Activated CD4-positive, alpha-beta T cell treated with anti-CD3 and anti-CD28 coated beads for 36 hours (primary cell): ENCODE measurements at regions of chr1 and their contacts with region 1.

Region 1: GRCh38 chr1:205750138-205751035 is at the start of gene NUCKS1:
- DNase-seq: peak; percentile 98
- ATAC-seq: peak; percentile 81
- H3K4me3 Mint-ChIP-seq: peak within 1 kb of the TSS; percentile 87
- H3K27ac Mint-ChIP-seq: peak within 1 kb of the TSS; percentile 96
- H3K4me1 Mint-ChIP-seq: peaks cover 32% of the 10 kb centered on the region
- H3K27me3 Mint-ChIP-seq: no peaks in the 10 kb centered on the region
- total RNA-seq, gene NUCKS1: 189 to 260 TPM

Region 2: GRCh38 chr1:205211169-205211838 is 539.1 kb before region 1 on chr1 and contains the start of gene DSTYK:
- CTCF ChIA-PET with region 1: no interaction called
- POLR2A ChIA-PET with region 1: no interaction called
- intact Hi-C with region 1: loop called in 1 of 2 experiments (anchors 5 kb)
- DNase-seq: peak; percentile 97
- ATAC-seq: peak; percentile 90
- H3K4me3 Mint-ChIP-seq: peak within 1 kb of the TSS; percentile 97
- H3K27ac Mint-ChIP-seq: peak within 1 kb of the TSS; percentile 95
- H3K4me1 Mint-ChIP-seq: peaks cover 54% of the 10 kb centered on the region
- H3K27me3 Mint-ChIP-seq: no peaks in the 10 kb centered on the region
- total RNA-seq, gene DSTYK: 9.4 to 12.3 TPM

Region 3: DNA sequence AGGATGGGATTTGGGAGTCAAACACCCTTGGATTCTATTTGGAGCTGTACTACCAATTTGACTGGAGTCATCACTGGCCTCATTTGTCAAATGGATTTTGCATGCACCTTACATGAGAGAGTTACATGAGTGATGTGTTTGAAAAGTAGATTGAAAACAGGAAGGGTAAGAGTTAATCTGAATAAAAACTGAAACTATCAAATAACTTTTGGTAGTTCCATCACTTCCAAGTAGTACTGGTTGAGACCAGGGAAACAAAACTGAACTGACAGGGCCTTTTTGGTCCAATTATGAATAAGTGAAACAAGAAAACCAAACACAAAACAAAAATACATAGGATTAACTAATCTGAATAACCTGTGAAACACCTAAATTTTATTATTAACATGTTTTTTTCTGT is 30.6 kb before region 1 on chr1:
- CTCF ChIA-PET with region 1: no interaction called
- POLR2A ChIA-PET with region 1: no interaction called
- intact Hi-C with region 1: loop called in 1 of 2 experiments (anchors 2 kb)
- DNase-seq: no peak
- ATAC-seq: peak; percentile 83
- H3K4me3 Mint-ChIP-seq: no peak overlapping the region
- H3K27ac Mint-ChIP-seq: peak overlapping the region; percentile 83
- H3K4me1 Mint-ChIP-seq: peaks cover 32% of the 10 kb centered on the region
- H3K27me3 Mint-ChIP-seq: no peaks in the 10 kb centered on the region

Region 4: DNA sequence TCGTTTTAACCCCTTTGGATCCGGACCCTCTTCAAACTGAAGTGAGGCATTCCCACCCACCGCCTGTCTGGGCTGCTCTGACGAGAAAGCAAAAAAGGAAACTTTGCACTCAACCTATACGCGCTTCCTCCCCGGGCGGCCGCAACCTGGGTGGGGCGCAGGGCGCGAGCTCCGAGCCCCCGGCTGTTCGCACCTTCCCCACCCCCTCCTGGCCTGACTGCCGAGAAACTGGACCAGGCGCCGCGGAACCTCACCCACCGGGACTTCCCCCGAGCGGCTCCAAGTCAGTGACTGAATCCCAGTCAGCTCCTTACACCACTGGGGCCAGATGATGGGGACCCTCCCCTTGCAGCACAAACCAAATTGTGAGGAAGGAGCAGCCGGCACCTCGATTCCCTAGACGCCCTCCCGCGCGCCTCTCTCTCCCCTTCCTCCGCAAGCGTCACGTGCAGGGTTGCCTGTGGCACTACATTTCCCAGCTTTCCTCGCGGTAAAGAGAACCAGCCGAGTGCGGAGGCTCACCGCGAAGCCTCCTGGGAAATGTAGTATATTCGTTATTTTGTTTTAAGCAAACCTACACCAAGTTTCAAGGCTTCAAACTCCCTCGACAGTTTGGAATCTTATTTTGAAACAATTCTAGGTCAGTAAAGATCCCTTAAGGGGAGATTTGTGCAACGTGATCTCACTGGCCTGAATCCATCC is 24.8 kb after region 1 on chr1 and contains the start of gene RAB29:
- CTCF ChIA-PET with region 1: interaction called, 11 read pairs
- POLR2A ChIA-PET with region 1: interaction called, 24 read pairs
- intact Hi-C with region 1: loop called (anchors 1 kb)
- DNase-seq: peak; percentile 93
- ATAC-seq: peak; percentile 80
- H3K4me3 Mint-ChIP-seq: peak within 1 kb of the TSS; percentile 89
- H3K27ac Mint-ChIP-seq: peak within 1 kb of the TSS; percentile 90
- H3K4me1 Mint-ChIP-seq: peaks cover 55% of the 10 kb centered on the region
- H3K27me3 Mint-ChIP-seq: no peaks in the 10 kb centered on the region
- total RNA-seq, gene RAB29: 29.3 to 29.4 TPM

Region 5: DNA sequence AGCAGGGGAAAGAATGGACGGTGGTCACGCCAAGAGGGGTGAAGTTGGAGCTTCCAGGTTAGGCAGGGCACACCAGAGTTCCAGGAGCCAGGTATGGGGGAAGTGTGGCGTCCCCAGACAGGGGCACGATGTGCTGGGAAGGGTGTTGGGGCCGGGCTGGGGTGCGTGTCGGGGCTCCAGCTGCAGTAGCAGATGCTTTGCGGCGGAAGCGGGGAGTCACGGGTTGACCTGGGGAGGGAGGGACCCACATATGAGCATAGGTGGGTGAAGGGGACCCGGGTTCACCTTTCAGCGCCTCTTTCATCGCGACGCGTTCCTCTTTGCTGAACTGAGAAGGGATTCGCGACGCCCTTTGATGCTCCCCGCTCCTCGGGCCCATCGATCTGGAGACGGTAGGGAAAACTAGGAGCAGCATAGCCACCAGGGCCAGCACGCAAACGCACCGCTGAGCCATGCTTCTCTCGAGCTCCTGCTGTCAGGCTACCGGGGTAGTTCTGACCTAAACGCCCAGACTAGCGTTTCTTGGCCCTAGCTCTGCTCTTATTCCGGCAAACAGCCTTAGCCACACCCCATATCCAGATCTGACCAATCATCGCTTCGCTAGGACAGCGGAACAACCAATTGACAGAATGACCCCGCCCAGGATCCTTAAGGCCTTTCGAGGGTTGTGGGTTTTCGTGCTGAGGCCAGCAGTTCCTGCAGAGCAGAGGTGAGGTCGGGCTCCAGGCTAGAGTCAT is 99.4 kb after region 1 on chr1 and contains the start of gene PM20D1:
- CTCF ChIA-PET with region 1: no interaction called
- POLR2A ChIA-PET with region 1: no interaction called
- intact Hi-C with region 1: loop called in 1 of 2 experiments (anchors 1 kb)
- DNase-seq: peak; percentile 89
- ATAC-seq: peak; percentile 98
- H3K4me3 Mint-ChIP-seq: peak within 1 kb of the TSS; percentile 83
- H3K27ac Mint-ChIP-seq: peak within 1 kb of the TSS; percentile 86
- H3K4me1 Mint-ChIP-seq: peaks cover 28% of the 10 kb centered on the region
- H3K27me3 Mint-ChIP-seq: no peaks in the 10 kb centered on the region
- total RNA-seq, gene PM20D1: 0.34 to 0.58 TPM